Activated CD4-positive, alpha-beta T cell treated with anti-CD3 and anti-CD28 coated beads, Interleukin-2, amount 10 ng/mL, durations not matched to agents 24 days and 14 days (primary cell): ENCODE measurements at regions of chr6 and their contacts with region 1.

Region 1: DNA sequence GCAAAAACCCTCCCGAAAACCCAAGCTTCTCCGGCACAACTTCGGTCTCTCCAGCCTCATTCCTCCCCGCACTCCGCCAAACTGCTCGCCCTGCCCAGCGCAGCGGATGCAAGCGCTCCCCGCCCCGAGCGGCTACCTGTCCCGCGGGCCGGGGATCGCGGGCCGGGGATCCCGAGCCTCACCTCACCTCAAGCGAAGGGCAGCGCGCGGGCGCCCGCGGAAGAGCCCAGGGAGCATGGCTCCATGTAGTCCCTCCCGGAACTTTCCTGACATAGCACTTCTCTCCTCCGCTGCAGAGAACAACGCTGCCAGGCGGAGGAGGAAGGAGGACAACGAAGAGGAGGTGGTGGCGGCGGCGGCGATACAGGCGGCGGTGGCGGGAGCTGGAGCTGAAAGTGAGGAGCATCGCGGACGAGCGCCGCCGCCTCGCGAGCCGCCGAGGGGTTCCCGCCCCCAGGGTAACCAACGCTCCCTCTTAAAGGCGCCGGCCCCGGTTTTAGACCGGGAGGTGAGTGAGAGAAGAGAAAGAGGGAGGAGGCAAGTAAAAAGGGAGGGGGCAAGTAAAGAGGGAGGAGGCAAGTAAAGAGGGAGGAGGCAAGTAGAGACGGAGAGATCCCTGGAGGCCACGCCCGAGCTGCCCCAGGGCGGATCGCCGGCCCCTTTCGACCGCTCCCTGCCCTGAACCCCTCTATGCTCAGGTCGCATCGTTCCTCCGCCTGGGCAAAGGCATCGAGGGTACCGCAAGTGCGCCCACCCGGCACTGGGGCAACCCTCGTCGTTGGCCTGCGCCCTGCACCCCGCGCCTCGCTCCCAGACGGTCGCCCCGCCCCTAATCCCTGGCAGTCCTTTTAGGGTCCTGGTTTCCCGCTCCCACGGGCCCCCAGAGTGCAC is at the start of gene GPR63:
- DNase-seq: peak; percentile 96
- H3K4me3 Mint-ChIP-seq: peak within 1 kb of the TSS; percentile 92
- H3K27ac Mint-ChIP-seq: peak within 1 kb of the TSS; percentile 75
- H3K4me1 Mint-ChIP-seq: peaks cover 25% of the 10 kb centered on the region
- H3K27me3 Mint-ChIP-seq: peaks cover 49% of the 10 kb centered on the region
- total RNA-seq, gene GPR63: 2.2 and 2.7 TPM in 2 replicates

Region 2: DNA sequence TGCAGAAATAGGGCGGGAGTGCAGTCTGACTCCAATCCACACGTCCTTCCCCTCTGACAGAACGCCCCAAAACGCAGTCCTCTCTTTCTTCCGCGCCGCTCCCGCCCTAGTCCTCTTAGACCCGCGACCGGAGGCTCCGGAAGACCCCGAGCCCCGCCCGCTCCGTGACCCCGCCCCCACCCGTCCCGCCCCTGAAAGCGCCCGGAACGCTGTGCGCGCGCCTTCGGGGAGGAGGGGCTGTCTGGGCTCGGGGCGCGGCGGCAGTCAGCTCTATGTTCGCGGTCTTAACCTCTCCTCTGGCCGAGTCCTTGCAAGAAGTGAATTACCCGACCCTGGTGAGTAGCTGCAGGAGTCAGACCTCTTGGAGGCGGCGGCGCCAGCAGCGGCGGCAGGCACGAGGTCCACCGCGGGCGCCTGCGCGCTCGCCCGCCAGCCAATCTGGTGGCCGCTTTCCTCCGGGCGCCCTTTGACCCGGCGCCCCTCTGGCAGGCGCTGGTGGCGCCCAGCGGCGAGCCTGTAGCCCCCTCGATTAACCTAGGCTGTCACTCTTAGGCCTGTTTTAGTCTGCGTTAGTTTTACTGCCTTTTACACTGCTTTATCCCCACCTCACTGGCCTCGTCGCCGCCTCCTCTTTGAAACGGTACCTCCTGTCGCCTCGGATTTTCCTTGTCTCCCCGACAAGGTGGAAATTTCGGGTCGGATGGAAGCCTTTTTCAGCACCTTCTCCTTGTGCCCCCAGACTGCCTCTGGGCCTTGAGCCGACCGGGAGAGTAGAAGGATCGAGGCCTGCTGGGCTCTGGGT is 1259.8 kb before region 1 on chr6 and contains the start of gene MANEA:
- intact Hi-C with region 1: loop called (anchors 10 kb)
- DNase-seq: peak; percentile 94
- H3K4me3 Mint-ChIP-seq: peak within 1 kb of the TSS; percentile 98
- H3K27ac Mint-ChIP-seq: peak within 1 kb of the TSS; percentile 98
- H3K4me1 Mint-ChIP-seq: peaks cover 42% of the 10 kb centered on the region
- H3K27me3 Mint-ChIP-seq: no peaks in the 10 kb centered on the region
- total RNA-seq, gene MANEA: 22.6 and 23.1 TPM in 2 replicates

Region 3: GRCh38 chr6:96923871-96924493 is 86.7 kb after region 1 on chr6:
- intact Hi-C with region 1: loop called (anchors 1 kb)
- DNase-seq: no peak
- H3K4me3 Mint-ChIP-seq: peak overlapping the region; percentile 91
- H3K27ac Mint-ChIP-seq: peak overlapping the region; percentile 91
- H3K4me1 Mint-ChIP-seq: peaks cover 31% of the 10 kb centered on the region
- H3K27me3 Mint-ChIP-seq: peaks cover 3% of the 10 kb centered on the region

Region 4: GRCh38 chr6:97049253-97050011 is 212.1 kb after region 1 on chr6:
- intact Hi-C with region 1: loop called (anchors 5 kb)
- DNase-seq: peak; percentile 55
- H3K4me3 Mint-ChIP-seq: peak overlapping the region; percentile 15
- H3K27ac Mint-ChIP-seq: peak overlapping the region; percentile 63
- H3K4me1 Mint-ChIP-seq: peaks cover 10% of the 10 kb centered on the region
- H3K27me3 Mint-ChIP-seq: no peaks in the 10 kb centered on the region

Region 5: DNA sequence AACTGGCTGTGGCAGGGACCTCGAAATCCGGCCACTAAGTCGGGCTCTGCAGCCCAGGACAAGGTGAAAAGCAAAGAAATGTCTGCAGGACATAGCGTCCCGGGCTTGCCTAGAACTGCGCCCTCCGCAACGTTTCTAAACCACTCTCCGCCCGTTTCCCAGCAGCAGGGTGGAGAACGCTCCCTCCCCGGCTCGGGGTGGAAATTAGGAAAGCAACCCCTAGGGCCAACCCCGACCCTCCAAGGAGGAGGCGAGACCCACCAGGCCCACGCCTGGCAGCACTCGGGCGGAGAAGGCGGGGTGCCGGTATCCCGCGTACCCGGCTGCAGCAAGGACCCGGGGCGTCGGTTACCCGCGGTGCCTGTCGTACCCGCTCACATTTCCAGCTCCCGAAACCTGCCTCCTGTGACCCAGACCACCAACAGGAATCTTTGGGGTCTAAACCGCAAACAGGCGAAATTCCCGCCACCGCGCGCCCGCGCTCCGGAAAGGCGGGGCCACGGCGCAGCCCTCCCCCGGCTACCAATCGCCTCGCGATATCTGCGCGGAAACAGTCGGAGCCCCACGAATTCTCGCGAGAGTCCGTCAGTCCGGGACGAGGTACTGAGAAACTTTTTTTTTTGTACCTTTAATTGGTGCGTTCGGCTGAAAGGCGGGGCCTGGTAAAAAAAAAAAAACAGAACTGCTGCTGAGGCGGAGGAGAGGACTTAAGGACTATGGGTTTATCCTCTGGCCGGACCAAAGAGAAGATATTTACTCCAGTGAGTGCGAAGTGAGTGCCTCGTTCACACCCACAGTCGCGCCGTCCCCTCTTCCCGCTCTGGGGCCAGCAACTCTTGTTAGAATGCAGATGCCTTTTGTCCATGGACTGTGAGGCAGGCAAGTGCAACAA is 445.6 kb after region 1 on chr6 and contains the start of gene MMS22L:
- intact Hi-C with region 1: loop called (anchors 2 kb)
- DNase-seq: peak; percentile 98
- H3K4me3 Mint-ChIP-seq: peak within 1 kb of the TSS; percentile 91
- H3K27ac Mint-ChIP-seq: peak within 1 kb of the TSS; percentile 94
- H3K4me1 Mint-ChIP-seq: peaks cover 23% of the 10 kb centered on the region
- H3K27me3 Mint-ChIP-seq: peaks cover 11% of the 10 kb centered on the region
- total RNA-seq, gene MMS22L: 54.8 and 65.2 TPM in 2 replicates